ENCODE measurements at regions of chr3 and their contacts with region 1.

Region 1: DNA sequence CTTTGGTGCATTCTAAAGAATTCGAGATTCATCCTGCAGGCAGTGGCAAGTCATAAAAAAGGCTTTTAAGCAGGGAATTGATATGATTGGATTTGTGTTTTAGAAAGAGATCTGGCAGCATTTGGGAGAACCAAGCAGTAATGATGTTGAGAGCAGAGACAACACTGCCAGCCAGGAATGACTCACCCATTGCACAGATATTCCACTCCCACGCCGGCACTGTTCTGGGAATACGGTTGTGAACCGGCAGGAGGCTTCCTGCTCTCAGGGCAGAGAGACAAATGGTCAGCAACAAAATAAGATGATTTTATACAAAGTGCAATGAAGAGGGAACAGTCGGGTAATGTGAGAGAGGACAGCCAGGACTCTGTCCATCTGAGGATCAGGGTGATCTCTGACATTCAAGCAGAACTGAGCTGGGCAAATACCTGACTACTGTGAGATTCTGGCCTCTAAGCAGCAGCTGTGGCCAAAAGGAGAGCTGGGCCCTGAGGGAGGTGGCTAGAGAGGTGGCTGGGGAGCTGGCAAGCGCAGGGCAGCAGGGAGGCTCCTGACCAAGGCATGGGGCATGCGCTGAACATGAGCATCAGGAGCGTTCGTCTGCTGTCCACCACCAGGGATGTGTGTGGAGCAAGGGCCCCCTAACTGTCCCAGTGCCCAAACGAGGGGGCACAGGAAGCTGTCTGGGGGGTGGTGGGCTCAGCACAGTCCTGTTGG is 56.1 kb upstream of the PLXNA1 start:
- DNase-seq: peak; percentile 34 to 90
- H3K4me3 ChIP-seq: peak overlapping the region in 1 of 2 donors; percentile 9
- H3K27ac ChIP-seq: peak overlapping the region; percentile 74 to 84
- H3K4me1 ChIP-seq: peaks cover 9 to 18% of the 10 kb centered on the region in 2 donors
- H3K27me3 ChIP-seq: no peaks in the 10 kb centered on the region
- CTCF ChIP-seq: peak; percentile 10 to 30 (median 18)

Region 2: DNA sequence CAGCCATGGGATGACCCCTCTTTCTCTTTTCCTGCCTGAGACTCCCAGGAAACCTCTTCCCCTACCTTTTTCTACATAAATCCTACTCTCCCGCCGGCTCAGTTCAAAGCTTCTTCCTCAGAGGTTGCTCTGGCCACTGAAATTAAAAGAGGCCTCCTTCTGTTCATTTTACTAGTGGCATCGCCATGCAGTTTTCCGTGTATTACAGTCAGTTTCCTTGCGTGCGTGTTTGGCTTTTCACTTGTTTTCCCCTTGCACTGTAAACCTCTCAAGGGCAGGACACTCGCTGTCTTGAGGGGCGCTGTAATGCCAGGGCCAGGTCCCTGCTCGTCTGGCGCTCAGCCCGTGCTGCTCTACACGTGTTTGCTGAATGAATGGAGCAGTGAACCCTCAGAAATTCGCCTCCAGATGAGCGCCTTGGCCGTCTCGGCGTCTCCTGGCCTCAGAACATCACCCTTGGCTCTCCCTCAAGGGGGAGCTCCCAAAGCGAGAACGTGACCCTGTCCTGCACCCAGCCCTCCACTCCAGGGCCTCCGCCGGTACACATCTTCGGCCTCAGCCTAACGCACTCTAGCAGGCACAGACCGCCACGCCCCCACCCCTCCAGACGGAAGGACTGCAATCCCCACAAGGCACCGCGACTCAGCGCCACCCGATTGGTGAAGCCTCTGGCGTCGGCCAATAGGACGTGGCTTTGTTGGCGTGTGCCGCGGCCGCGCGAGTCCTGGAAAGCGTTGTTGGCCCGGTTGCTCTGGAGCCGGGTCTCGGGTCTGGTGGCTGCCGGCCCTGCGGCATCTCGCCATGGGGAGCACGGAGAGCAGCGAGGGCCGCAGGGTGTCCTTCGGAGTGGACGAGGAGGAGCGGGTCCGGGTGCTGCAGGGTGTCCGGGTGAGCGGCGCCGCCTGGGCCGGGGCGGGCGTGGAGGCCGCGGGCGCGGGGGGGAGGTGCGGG is 223.1 kb before region 1 on chr3 and contains the start of gene CHCHD6:
- intact Hi-C with region 1: no loop called
- DNase-seq: peak; percentile 79 to 97
- H3K4me3 ChIP-seq: peak within 1 kb of the TSS; percentile 59 to 89
- H3K27ac ChIP-seq: no peak within 1 kb of the TSS
- H3K4me1 ChIP-seq: peaks cover 0 to 3% of the 10 kb centered on the region in 2 donors
- H3K27me3 ChIP-seq: no peaks in the 10 kb centered on the region
- CTCF ChIP-seq: peak in 1 of 3 experiments; percentile 9
- total RNA-seq, gene CHCHD6: 1.2 TPM

Region 3: DNA sequence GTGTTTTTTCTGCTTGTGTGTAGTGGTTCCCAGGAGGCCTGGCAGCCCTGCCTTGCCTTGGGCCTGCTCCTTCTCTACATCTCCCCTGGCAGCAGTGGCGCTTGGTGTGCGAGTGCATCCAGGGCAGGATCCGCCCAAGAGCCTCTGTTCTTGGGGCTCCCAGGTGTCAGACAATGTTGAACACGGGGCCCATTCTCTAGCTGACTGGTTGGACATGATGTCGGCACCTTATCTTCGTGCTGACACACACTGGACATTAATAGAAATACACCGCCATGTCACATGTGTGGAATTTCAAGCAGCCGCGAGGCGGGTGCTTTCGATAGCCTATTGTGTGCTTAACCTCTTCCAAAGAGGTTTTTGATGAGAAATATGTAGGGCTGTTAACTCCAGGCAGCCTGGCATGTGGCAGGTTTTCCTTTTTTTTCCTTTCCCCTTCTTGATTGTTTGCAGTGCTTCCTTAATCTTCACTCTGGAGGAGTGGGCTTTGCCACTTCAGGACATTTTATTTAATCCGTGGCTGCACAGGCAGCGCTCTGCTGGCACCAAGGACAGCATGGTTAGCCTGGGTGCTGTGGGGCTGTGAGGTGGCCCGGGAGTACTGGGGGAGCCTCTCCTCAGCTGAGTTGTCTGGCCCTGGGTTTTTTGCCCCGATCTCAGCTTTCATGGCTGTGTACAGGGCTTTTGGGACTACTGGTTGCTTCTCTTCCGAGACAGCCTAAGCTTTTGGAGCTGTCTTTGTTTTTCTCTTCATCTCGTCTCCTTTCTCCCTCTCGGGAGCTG is 180.3 kb before region 1 on chr3:
- intact Hi-C with region 1: loop called (anchors 5 kb)
- DNase-seq: no peak
- H3K4me3 ChIP-seq: peak overlapping the region in 1 of 2 donors; percentile 37
- H3K27ac ChIP-seq: peak overlapping the region; percentile 74 to 91
- H3K4me1 ChIP-seq: peaks cover 8 to 22% of the 10 kb centered on the region in 2 donors
- H3K27me3 ChIP-seq: no peaks in the 10 kb centered on the region
- CTCF ChIP-seq: peak in 2 of 3 experiments; percentile 23 to 38